PC-9 (cell line): ENCODE measurements at regions of chr4 and their contacts with region 1.

Region 1: DNA sequence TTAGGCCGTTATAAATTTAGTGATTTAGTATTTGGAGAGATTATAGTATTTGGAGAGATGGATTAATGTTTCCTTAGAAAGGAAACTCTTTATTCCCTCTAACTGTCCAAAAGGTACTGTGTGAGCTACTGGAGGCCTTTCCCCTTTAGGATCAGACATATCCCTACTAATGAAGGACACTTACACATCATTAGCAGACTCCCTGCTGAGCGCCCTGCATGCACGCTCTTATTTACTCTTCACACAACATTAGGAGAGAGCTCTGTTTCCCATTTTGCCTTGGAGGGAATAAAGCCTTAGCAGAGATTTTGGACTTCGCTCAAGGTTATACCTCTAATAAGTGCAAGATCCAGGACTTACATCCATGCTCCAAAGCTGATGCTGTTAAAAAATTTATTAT is 17.8 kb upstream of the STOX2 start:
- DNase-seq: no peak
- H3K4me3 ChIP-seq: no peak overlapping the region
- H3K27ac ChIP-seq: no peak overlapping the region
- H3K4me1 ChIP-seq: no peaks in the 10 kb centered on the region
- H3K27me3 ChIP-seq: no peaks in the 10 kb centered on the region
- CTCF ChIP-seq: no peak

Region 2: GRCh38 chr4:184016759-184017668 is 129.7 kb after region 1 on chr4:
- CTCF ChIA-PET with region 1: no interaction called
- POLR2A ChIA-PET with region 1: no interaction called
- intact Hi-C with region 1: no loop called
- DNase-seq: no peak
- H3K4me3 ChIP-seq: no peak overlapping the region
- H3K27ac ChIP-seq: no peak overlapping the region
- H3K4me1 ChIP-seq: 0 out of 2 replicates have a peak, but pooled peaks cover 7% of the 10 kb centered on the region
- H3K27me3 ChIP-seq: no peaks in the 10 kb centered on the region
- CTCF ChIP-seq: no peak

Region 3: DNA sequence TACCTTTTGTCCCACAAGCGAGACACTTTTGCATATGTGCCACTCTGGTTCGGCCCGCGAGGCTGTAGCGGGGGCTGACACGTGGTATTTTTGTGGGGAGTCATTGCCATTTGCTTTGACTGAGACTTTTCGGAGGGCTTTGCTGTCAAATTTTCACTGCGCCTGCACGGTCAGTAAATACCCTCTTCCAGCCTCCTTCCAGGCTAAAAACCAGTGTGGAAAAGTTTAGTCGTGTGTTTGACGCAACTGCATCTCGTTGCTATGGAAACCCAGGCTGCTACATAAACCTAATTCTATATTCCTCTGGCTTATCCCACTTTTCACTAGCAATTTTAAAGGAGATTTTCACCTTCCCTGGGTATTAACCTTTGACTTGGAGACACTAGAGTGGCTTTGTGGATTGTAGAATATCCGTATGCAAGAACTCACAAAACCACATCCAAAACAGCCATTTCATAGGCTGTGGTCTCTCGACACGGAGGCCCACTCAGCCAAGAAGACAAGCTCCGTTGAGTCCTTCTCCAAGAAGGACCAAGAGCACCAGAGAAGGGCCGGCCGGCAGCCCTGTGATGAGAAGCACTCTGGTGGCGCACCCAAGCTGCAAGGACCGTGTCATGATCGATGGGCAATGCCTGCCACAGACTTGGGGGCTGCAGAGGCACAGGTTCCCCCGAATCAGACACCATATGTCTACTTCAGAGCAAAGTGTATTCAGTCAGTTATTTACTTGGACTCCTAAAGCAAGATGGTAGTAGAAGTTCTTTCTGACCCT is 368.7 kb after region 1 on chr4:
- CTCF ChIA-PET with region 1: no interaction called
- POLR2A ChIA-PET with region 1: interaction called, 11 read pairs
- intact Hi-C with region 1: no loop called
- DNase-seq: no peak
- H3K4me3 ChIP-seq: no peak overlapping the region
- H3K27ac ChIP-seq: no peak overlapping the region
- H3K4me1 ChIP-seq: no peaks in the 10 kb centered on the region
- H3K27me3 ChIP-seq: no peaks in the 10 kb centered on the region
- CTCF ChIP-seq: no peak